WTC11 (cell line): ENCODE measurements at regions of chr11 and their contacts with region 1.

Region 1: GRCh38 chr11:26551186-26551801 is 20.8 kb downstream of the MUC15 start:
- DNase-seq: no peak
- ATAC-seq: no peak
- H3K4me3 Mint-ChIP-seq: no peak overlapping the region
- H3K27ac Mint-ChIP-seq: no peak overlapping the region
- H3K4me1 Mint-ChIP-seq: 0 out of 2 replicates have a peak, but pooled peaks cover 5% of the 10 kb centered on the region
- H3K27me3 Mint-ChIP-seq: no peaks in the 10 kb centered on the region; the same call in 1 of the 2 replicates
- CTCF ChIP-seq: no peak

Region 2: DNA sequence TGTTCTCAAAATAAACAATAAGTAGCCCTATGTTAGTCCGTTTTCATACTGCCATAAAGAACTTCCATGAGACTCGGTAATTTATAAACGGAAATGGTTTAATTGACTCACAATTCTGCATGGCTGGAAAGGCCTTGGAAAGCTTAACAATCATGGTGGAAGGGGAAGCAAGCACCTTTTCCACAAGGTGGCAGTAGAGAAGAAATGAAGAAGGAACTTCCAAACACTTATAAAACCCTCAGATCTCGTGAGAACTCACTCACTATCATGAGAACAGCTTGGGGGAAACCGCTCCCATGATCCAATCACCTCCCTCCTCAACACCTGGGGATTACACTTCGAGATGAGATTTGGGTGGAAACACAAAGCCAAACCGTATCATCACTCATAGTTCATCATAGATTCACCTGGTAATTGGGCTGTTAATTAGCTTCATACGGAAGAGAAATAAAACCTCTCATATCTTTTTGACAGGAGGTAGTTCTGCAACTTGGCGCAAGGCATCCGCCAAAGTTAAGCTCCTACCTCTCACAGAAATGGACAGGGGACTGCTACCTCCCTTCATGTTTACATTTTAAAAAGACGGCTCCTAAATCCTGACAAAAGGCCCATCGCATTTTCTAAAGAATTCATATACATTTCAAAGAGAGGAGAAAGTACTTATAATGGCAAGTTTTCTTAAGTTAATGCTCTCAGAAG is 28.2 kb before region 1 on chr11:
- CTCF ChIA-PET with region 1: interaction called, 10 read pairs
- POLR2A ChIA-PET with region 1: interaction called, 3 read pairs
- DNase-seq: peak; percentile 31
- ATAC-seq: peak; percentile 92
- H3K4me3 Mint-ChIP-seq: peak overlapping the region; percentile 82
- H3K27ac Mint-ChIP-seq: peak overlapping the region; percentile 33
- H3K4me1 Mint-ChIP-seq: peaks cover 9% of the 10 kb centered on the region
- H3K27me3 Mint-ChIP-seq: peaks cover 84% of the 10 kb centered on the region
- CTCF ChIP-seq: no peak

Region 3: GRCh38 chr11:26704249-26704648 is 153.0 kb after region 1 on chr11:
- CTCF ChIA-PET with region 1: no interaction called
- POLR2A ChIA-PET with region 1: no interaction called
- DNase-seq: no peak
- ATAC-seq: no peak
- H3K4me3 Mint-ChIP-seq: no peak overlapping the region
- H3K27ac Mint-ChIP-seq: no peak overlapping the region
- H3K4me1 Mint-ChIP-seq: peaks cover 9% of the 10 kb centered on the region
- H3K27me3 Mint-ChIP-seq: no peaks in the 10 kb centered on the region
- CTCF ChIP-seq: no peak